GM12878 (cell line): ENCODE measurements at regions of chr17 and their contacts with region 1.

Region 1: DNA sequence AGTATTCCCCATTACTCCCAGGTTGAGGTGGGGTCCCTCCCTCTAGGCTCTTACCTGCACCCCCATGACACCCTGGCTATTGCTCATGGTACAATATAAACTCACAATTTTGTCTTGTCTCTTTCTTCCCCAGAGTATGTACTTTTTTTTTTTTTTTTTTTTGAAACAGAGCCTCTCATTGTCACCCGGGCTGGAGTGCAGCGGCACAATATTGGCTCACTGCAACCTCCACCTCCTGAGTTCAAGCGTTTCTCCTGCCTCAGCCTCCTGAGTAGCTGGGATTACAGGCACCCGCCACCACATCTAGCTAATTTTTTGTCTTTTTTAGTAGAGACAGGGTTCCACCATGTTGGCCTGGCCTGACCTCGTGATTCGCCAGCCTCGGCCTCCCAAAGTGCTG is 8.5 kb downstream of the KANSL1 start:
- DNase-seq: no peak
- ATAC-seq: no peak
- H3K4me3 ChIP-seq: no peak overlapping the region
- H3K27ac ChIP-seq: no peak overlapping the region
- H3K4me1 ChIP-seq: peaks cover 37% of the 10 kb centered on the region
- H3K27me3 ChIP-seq: no peaks in the 10 kb centered on the region
- CTCF ChIP-seq: no peak
- EP300 ChIP-seq: no peak
- POLR2A ChIP-seq: no peak
- RAD21 ChIP-seq: no peak

Region 2: GRCh38 chr17:46049656-46050055 is 135.0 kb before region 1 on chr17:
- CTCF ChIA-PET with region 1: interaction called, 120 read pairs
- POLR2A ChIA-PET with region 1: no interaction called
- RAD21 ChIA-PET with region 1: interaction called, 61 read pairs
- SMC1A ChIA-PET with region 1: interaction called, 88 read pairs
- in situ Hi-C with region 1: loop called (anchors 5 kb)
- intact Hi-C with region 1: loop called (anchors 1 kb)
- DNase-seq: no peak
- ATAC-seq: no peak
- H3K4me3 ChIP-seq: no peak overlapping the region
- H3K27ac ChIP-seq: no peak overlapping the region
- H3K4me1 ChIP-seq: peaks cover 8% of the 10 kb centered on the region
- H3K27me3 ChIP-seq: no peaks in the 10 kb centered on the region
- CTCF ChIP-seq: no peak
- EP300 ChIP-seq: no peak
- POLR2A ChIP-seq: no peak
- RAD21 ChIP-seq: no peak

Region 3: DNA sequence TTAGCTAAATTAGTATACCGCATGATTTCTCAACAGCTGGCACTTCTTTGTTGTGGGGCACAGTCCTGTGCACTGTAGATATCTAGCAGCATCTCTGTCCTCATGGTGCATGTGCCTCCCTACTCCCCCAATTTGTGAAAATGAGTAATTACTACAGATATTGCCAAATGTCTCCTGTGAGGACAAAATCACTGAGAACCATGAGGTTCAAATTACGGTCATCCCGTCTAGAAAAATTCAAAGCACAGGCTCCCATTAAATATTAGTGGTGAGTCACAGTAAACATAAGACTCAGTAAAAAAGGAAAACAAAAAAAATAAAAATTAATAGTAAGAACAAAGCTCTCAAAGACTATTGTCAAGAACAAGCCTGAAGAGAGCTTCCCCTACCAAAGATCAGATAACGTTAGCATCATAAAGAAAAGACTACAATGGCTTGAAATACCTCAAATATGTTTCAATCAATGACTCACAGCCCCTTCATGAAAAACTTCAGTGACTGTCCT is 127.8 kb before region 1 on chr17:
- CTCF ChIA-PET with region 1: interaction called, 24 read pairs
- POLR2A ChIA-PET with region 1: interaction called, 5 read pairs
- RAD21 ChIA-PET with region 1: interaction called, 10 read pairs
- SMC1A ChIA-PET with region 1: interaction called, 22 read pairs
- in situ Hi-C with region 1: no loop called
- intact Hi-C with region 1: no loop called
- DNase-seq: no peak
- ATAC-seq: no peak
- H3K4me3 ChIP-seq: no peak overlapping the region
- H3K27ac ChIP-seq: no peak overlapping the region
- H3K4me1 ChIP-seq: peaks cover 6% of the 10 kb centered on the region
- H3K27me3 ChIP-seq: no peaks in the 10 kb centered on the region
- CTCF ChIP-seq: no peak
- EP300 ChIP-seq: no peak
- POLR2A ChIP-seq: no peak
- RAD21 ChIP-seq: no peak

Region 4: GRCh38 chr17:46089389-46089965 is 95.2 kb before region 1 on chr17:
- CTCF ChIA-PET with region 1: interaction called, 41 read pairs
- POLR2A ChIA-PET with region 1: interaction called, 4 read pairs
- RAD21 ChIA-PET with region 1: interaction called, 8 read pairs
- SMC1A ChIA-PET with region 1: interaction called, 44 read pairs
- in situ Hi-C with region 1: no loop called
- intact Hi-C with region 1: no loop called
- DNase-seq: no peak
- ATAC-seq: no peak
- H3K4me3 ChIP-seq: no peak overlapping the region
- H3K27ac ChIP-seq: no peak overlapping the region
- H3K4me1 ChIP-seq: no peaks in the 10 kb centered on the region
- H3K27me3 ChIP-seq: no peaks in the 10 kb centered on the region
- CTCF ChIP-seq: no peak
- EP300 ChIP-seq: no peak
- POLR2A ChIP-seq: no peak
- RAD21 ChIP-seq: no peak

Region 5: GRCh38 chr17:48084932-48085444 is 1900.3 kb after region 1 on chr17:
- CTCF ChIA-PET with region 1: no interaction called
- POLR2A ChIA-PET with region 1: no interaction called
- RAD21 ChIA-PET with region 1: no interaction called
- SMC1A ChIA-PET with region 1: no interaction called
- in situ Hi-C with region 1: no loop called
- intact Hi-C with region 1: no loop called
- DNase-seq: no peak
- ATAC-seq: no peak
- H3K4me3 ChIP-seq: no peak overlapping the region
- H3K27ac ChIP-seq: no peak overlapping the region
- H3K4me1 ChIP-seq: no peaks in the 10 kb centered on the region
- H3K27me3 ChIP-seq: no peaks in the 10 kb centered on the region
- CTCF ChIP-seq: no peak
- EP300 ChIP-seq: no peak
- POLR2A ChIP-seq: no peak
- RAD21 ChIP-seq: no peak